Natural killer cell (primary cell): ENCODE measurements at regions of chr9 and their contacts with region 1.

Region 1: DNA sequence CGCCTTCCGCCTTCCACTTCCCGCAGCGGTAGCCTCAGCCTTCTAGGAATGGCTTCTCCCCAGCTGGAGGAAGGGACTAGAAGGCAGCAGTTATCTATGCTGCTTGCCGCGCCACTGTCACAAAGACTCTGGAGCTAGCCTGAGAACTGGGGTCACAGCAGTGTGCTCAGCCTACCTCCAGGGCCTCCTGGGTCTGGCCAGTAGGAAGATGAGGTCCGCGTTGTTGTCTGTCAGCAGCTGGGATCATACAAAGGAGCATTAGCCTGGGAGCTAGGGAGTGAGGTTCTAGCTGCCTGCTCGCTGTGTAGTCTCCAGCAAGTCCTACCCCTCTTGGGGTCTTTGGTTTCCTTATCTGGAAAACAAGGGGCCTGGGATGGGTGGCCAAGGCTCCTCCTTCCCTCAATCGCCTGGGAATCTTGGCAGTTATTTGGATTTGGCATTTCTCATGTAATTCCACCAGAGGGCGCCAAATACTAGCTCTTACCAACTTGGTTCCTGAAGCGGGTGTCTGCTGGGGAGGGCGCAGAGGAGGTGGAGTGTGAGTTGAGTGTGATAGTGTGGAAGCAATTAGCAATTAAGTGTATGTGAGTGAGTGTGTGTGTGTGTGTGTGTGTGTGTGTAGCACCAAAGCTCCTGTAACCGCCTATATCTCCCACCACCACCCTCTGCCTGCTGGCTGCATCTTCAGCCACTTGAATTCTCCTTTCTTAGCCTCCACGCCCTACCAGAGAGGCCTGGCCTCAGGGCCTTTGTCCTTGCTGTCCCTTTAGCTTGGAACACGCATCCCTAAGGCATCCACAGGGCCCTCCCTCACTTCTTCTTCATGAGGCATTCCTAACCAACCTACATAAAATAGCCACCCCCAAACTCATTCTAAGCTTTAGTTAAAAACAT is 97.1 kb downstream of the ENTREP1 start:
- DNase-seq: peak in 1 of 2 donors; percentile 71
- ATAC-seq: peak in 2 of 3 donors; percentile 64 to 75
- H3K4me3 ChIP-seq: no peak overlapping the region
- H3K4me3 Mint-ChIP-seq: no peak overlapping the region
- H3K27ac ChIP-seq: no peak overlapping the region
- H3K27ac Mint-ChIP-seq: no peak overlapping the region
- H3K4me1 ChIP-seq: no peaks in the 10 kb centered on the region
- H3K4me1 Mint-ChIP-seq: no peaks in the 10 kb centered on the region
- H3K27me3 ChIP-seq: no peaks in the 10 kb centered on the region
- H3K27me3 Mint-ChIP-seq: peaks cover 0 to 5% of the 10 kb centered on the region in 2 donors
- CTCF ChIP-seq: peak; percentile 56

Region 2: GRCh38 chr9:69376651-69377050 is 45.5 kb before region 1 on chr9:
- intact Hi-C with region 1: loop called (anchors 10 kb)
- DNase-seq: no peak
- ATAC-seq: no peak
- H3K4me3 ChIP-seq: no peak overlapping the region
- H3K4me3 Mint-ChIP-seq: no peak overlapping the region
- H3K27ac ChIP-seq: no peak overlapping the region
- H3K27ac Mint-ChIP-seq: no peak overlapping the region
- H3K4me1 ChIP-seq: no peaks in the 10 kb centered on the region
- H3K4me1 Mint-ChIP-seq: no peaks in the 10 kb centered on the region
- H3K27me3 ChIP-seq: no peaks in the 10 kb centered on the region
- H3K27me3 Mint-ChIP-seq: no peaks in the 10 kb centered on the region
- CTCF ChIP-seq: no peak

Region 3: GRCh38 chr9:69549310-69550202 is 127.4 kb after region 1 on chr9:
- intact Hi-C with region 1: loop called (anchors 2 kb)
- DNase-seq: peak in 1 of 2 donors; percentile 58
- ATAC-seq: peak in 1 of 3 donors; percentile 59
- H3K4me3 ChIP-seq: no peak overlapping the region
- H3K4me3 Mint-ChIP-seq: no peak overlapping the region
- H3K27ac ChIP-seq: no peak overlapping the region
- H3K27ac Mint-ChIP-seq: no peak overlapping the region
- H3K4me1 ChIP-seq: no peaks in the 10 kb centered on the region
- H3K4me1 Mint-ChIP-seq: no peaks in the 10 kb centered on the region
- H3K27me3 ChIP-seq: no peaks in the 10 kb centered on the region
- H3K27me3 Mint-ChIP-seq: peaks cover 7 to 43% of the 10 kb centered on the region in 2 donors
- CTCF ChIP-seq: peak; percentile 67

Region 4: DNA sequence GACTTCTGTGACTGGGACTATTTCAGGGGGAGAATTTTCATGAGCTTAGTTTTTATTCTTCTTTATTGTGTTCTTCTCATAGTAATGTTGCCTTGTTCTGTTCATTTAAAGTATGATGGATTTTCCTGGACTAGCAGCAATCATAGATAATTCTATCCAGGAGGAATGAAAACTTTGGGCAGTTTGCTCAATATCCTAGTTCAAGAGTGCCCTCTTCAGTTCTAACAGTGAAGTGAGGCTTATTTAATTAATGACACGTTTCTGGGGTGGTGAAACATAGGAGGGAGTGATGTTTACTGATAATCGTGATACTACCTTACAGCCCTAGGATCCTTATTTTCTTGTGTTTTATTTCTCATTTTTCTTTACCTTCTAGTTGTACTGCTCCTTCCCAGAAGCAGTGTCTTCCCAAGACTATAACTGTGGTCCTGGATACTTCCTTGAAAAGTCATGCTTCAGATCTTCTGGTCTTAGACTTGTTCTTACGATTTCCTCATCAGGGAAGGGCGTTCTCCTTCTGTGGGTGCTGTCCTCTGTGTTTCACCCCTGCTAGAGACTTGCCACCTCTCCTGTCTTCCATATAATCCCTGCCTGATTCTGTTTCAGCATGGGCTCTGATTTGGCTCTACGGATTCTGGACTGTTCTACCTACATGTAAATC is 455.8 kb after region 1 on chr9:
- intact Hi-C with region 1: loop called (anchors 2 kb)
- DNase-seq: peak in 1 of 2 donors; percentile 49
- ATAC-seq: no peak
- H3K4me3 ChIP-seq: no peak overlapping the region
- H3K4me3 Mint-ChIP-seq: no peak overlapping the region
- H3K27ac ChIP-seq: no peak overlapping the region
- H3K27ac Mint-ChIP-seq: no peak overlapping the region
- H3K4me1 ChIP-seq: no peaks in the 10 kb centered on the region
- H3K4me1 Mint-ChIP-seq: no peaks in the 10 kb centered on the region
- H3K27me3 ChIP-seq: no peaks in the 10 kb centered on the region
- H3K27me3 Mint-ChIP-seq: peaks cover 8 to 15% of the 10 kb centered on the region in 2 donors
- CTCF ChIP-seq: peak; percentile 37

Region 5: DNA sequence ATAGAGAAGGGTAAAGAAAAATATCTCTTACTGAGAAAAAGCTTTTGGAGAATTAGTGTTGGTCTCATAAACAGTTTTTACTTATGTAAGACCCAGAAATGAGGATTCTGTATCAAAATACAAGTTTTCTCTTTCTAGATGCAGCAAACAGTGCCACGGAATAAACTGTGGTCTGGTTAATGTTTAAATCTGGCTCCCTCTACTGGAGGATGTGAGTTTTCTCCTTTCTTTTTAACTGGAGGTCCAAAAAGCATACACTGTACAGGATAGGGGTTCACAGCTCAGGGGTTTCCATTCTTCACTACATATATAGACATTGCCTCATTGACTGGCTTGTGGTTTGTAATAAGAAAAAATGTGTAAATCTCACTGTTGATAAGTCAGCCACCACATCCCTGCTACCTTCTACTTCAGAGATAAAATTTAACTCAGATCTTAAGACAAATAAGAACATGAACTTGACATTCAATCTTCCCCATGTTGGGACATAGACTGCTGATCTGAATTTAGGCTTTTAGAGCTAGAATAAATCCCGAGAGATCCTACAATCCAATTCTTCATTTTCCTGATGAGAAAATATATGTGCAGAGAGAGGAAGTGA is 497.4 kb after region 1 on chr9:
- intact Hi-C with region 1: loop called (anchors 10 kb)
- DNase-seq: peak in 1 of 2 donors; percentile 60
- ATAC-seq: peak; percentile 48 to 79 (median 53)
- H3K4me3 ChIP-seq: no peak overlapping the region
- H3K4me3 Mint-ChIP-seq: no peak overlapping the region
- H3K27ac ChIP-seq: no peak overlapping the region
- H3K27ac Mint-ChIP-seq: no peak overlapping the region
- H3K4me1 ChIP-seq: no peaks in the 10 kb centered on the region
- H3K4me1 Mint-ChIP-seq: peaks cover 0 to 5% of the 10 kb centered on the region in 2 donors
- H3K27me3 ChIP-seq: no peaks in the 10 kb centered on the region
- H3K27me3 Mint-ChIP-seq: peaks cover 5 to 13% of the 10 kb centered on the region in 2 donors
- CTCF ChIP-seq: peak; percentile 50

Region 6: DNA sequence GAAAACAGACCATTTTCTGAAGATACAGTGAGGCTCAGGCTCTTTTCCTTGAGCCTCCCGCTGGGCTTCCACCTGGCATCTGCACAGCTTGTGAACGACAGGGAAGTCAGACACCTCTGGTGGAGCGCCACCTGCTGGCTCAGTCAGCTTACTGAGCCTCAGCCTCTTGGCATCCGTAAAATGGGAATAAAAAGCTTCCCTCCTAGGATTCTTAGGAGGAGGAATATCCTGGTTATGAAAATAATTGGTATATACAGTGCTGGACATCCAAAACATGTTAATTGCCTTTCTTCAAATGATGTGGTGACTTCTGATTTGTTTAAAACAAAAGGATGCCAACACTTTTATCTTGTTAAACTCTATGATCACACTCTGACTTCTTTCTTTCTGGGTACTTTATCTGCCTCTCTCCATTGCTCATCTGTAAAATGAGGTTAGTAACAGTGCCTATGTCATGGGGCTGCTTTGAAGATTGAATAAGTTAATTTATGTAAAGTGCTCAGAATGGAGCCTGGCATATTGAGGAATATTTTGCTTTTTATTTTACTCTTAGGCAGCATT is 689.0 kb after region 1 on chr9:
- intact Hi-C with region 1: loop called (anchors 2 kb)
- DNase-seq: peak; percentile 35 to 66
- ATAC-seq: peak; percentile 50 to 71 (median 65)
- H3K4me3 ChIP-seq: no peak overlapping the region
- H3K4me3 Mint-ChIP-seq: no peak overlapping the region
- H3K27ac ChIP-seq: no peak overlapping the region
- H3K27ac Mint-ChIP-seq: no peak overlapping the region
- H3K4me1 ChIP-seq: peaks cover 3% of the 10 kb centered on the region
- H3K4me1 Mint-ChIP-seq: peaks cover 0 to 8% of the 10 kb centered on the region in 2 donors
- H3K27me3 ChIP-seq: no peaks in the 10 kb centered on the region
- H3K27me3 Mint-ChIP-seq: peaks cover 12 to 14% of the 10 kb centered on the region in 2 donors
- CTCF ChIP-seq: peak; percentile 87

Region 7: GRCh38 chr9:70602321-70603019 is 1180.3 kb after region 1 on chr9:
- intact Hi-C with region 1: loop called (anchors 10 kb)
- DNase-seq: peak in 1 of 2 donors; percentile 76
- ATAC-seq: peak in 2 of 3 donors; percentile 67 to 79
- H3K4me3 ChIP-seq: no peak overlapping the region
- H3K4me3 Mint-ChIP-seq: no peak overlapping the region
- H3K27ac ChIP-seq: no peak overlapping the region
- H3K27ac Mint-ChIP-seq: no peak overlapping the region
- H3K4me1 ChIP-seq: no peaks in the 10 kb centered on the region
- H3K4me1 Mint-ChIP-seq: no peaks in the 10 kb centered on the region
- H3K27me3 ChIP-seq: no peaks in the 10 kb centered on the region
- H3K27me3 Mint-ChIP-seq: no peaks in the 10 kb centered on the region
- CTCF ChIP-seq: peak; percentile 74